ENCODE measurements at regions of chr22 and their contacts with region 1.

Region 1: GRCh38 chr22:35231585-35232084 is 25.7 kb upstream of the HMGXB4 start:
- DNase-seq: peak; percentile 31 to 78
- ATAC-seq: peak; percentile 85 to 97
- H3K4me3 ChIP-seq: no peak overlapping the region; the same call in 2 of the 3 replicates
- H3K27ac ChIP-seq: no peak overlapping the region
- H3K4me1 ChIP-seq: no peaks in the 10 kb centered on the region
- CTCF ChIP-seq: peak; percentile 65
- EP300 ChIP-seq: no peak
- POLR2A ChIP-seq: no peak
- RAD21 ChIP-seq: peak; percentile 63 to 73

Region 2: DNA sequence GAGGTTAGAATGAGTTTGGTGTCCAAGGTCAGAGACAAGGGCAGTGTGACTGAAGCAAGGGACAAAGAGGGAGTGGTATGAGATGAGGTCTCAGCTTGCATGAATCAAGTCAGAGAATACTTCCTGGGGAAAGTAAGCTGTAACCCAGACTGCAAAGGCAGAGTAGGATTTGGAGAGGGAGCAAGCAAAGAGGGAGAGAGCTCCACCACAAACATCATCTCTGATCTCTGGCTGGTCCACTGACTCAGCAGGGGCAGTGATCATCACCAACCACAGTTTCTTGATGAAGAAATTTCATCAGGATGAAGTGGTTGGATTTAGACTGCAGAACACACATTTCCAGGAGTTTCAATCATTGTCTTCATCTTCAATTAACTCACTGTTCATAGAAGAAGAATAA is 29.3 kb before region 1 on chr22:
- CTCF ChIA-PET with region 1: interaction called, 10 read pairs
- POLR2A ChIA-PET with region 1: no interaction called
- DNase-seq: no peak
- ATAC-seq: no peak
- H3K4me3 ChIP-seq: no peak overlapping the region
- H3K27ac ChIP-seq: no peak overlapping the region
- H3K4me1 ChIP-seq: no peaks in the 10 kb centered on the region
- CTCF ChIP-seq: no peak
- EP300 ChIP-seq: no peak
- POLR2A ChIP-seq: no peak
- RAD21 ChIP-seq: no peak

Region 3: DNA sequence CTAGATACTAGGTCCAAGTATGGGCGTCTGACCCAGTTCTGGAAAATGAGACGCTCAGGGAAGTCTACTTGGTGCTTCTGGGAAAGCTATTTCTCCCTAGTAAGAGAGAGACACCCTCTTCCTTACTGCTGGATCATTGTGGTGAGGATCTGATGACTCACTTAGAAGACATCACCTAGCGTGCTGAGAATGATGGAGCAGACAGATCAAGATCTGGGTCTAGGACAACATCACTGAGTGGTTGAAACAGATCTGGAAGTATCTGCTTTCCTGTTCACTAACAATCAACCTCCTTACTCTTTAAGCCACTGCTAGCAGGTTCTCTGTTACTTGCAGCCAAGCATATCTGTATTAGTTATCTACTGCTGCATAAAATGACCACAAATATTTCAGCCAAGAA is 12.6 kb before region 1 on chr22:
- CTCF ChIA-PET with region 1: interaction called, 16 read pairs
- POLR2A ChIA-PET with region 1: no interaction called
- DNase-seq: peak; percentile 7 to 17
- ATAC-seq: peak; percentile 69 to 71; a peak in 5 of 6 replicates
- H3K4me3 ChIP-seq: no peak overlapping the region
- H3K27ac ChIP-seq: no peak overlapping the region
- H3K4me1 ChIP-seq: no peaks in the 10 kb centered on the region
- CTCF ChIP-seq: no peak
- EP300 ChIP-seq: no peak
- POLR2A ChIP-seq: no peak
- RAD21 ChIP-seq: no peak

Region 4: DNA sequence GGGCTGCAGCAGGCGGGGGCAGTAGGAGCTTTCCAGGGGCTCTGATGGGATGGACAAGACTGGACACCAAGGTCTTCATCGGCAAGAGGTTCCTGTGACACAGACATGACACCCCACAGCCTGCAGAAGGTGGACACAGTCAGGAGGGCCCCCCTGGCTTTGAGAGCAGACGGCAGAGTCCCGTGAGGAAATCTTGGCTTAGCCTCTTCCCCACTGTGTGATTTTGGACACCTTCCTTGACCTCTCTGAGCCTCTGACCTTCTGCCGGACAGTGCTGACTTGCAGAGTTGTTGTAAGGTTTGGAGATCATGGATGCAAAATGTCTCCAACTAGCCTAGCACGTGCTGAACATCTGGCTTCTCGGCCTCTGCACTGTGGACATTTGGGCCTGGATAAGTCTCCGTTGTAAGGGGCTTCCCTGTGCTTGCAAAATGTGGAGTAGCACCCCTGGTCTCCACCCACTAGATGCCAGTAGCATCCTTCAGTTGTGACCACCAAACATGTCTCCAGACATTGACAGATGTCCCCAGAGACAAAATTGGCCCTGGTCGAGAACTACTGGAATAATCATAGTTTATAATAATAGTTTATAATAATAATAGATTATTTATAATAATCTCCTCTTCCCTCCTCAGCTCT is 222.9 kb after region 1 on chr22:
- CTCF ChIA-PET with region 1: no interaction called
- POLR2A ChIA-PET with region 1: no interaction called
- DNase-seq: no peak
- ATAC-seq: peak in 1 of 2 experiments; percentile 40; a peak in 2 of 6 replicates
- H3K4me3 ChIP-seq: no peak overlapping the region
- H3K27ac ChIP-seq: no peak overlapping the region
- H3K4me1 ChIP-seq: no peaks in the 10 kb centered on the region
- CTCF ChIP-seq: no peak
- EP300 ChIP-seq: no peak
- POLR2A ChIP-seq: no peak
- RAD21 ChIP-seq: peak; percentile 16 to 17; a peak in 2 of 5 replicates

Measured in A549 (cell line).